ENCODE measurements at regions of chr11 and their contacts with region 1.

Region 1: GRCh38 chr11:76799066-76799804 is 16.1 kb downstream of the TSKU start:
- DNase-seq: no peak
- H3K4me3 ChIP-seq: no peak overlapping the region
- CTCF ChIP-seq: peak; percentile 85

Region 2: GRCh38 chr11:76706672-76707071 is 92.6 kb before region 1 on chr11:
- in situ Hi-C with region 1: loop called (anchors 5 kb)
- DNase-seq: no peak
- H3K4me3 ChIP-seq: no peak overlapping the region
- CTCF ChIP-seq: no peak

Region 3: DNA sequence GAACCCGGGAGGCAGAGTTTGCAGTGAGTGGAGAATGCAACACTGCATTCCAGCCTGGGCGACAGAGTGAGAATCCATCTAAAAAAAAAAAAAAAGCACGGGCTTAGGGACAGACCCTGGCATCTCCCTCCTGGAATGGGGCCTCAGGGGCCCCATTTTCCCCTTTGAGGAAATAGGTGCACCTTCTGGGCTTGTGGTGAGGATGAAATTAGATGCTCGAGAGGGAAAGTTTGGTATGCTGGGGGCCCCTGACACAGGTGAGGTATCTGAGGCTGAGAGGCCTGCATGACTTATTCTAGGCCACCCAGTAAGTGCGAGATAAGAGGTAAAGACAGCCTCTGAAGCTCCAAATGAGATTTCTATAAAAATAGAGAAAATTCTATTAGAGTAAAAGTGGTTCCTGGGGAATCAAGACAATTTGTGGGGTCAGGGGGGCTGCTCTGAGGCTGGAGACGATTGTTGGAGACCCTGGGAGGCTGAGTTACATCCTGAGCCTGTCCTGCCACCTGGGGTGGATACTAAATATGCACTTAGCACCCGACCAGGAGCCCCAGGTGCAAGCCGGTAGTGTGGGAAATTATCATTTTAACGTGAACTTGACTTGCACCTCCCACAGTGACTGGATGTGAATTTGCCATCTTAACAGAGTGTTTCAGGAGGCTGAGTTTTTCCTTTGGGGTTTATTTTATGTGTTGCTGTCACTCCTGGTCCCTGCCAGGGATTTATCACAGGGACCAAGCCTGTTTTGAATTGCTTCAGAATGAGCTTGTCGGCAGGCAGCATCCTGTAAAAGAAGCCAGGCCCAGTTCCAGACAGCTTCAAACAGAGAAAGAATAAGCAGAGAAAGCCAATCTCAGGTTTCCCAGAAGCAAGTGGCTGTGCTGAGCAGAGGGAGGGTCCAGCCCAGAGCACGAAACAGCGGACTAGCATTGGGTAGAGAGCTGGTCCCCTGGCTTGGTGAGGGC is 64.5 kb before region 1 on chr11:
- in situ Hi-C with region 1: loop called (anchors 5 kb)
- DNase-seq: no peak
- H3K4me3 ChIP-seq: no peak overlapping the region
- CTCF ChIP-seq: no peak

Region 4: GRCh38 chr11:76835928-76836612 is 36.8 kb after region 1 on chr11:
- in situ Hi-C with region 1: loop called (anchors 5 kb)
- DNase-seq: peak; percentile 87
- H3K4me3 ChIP-seq: no peak overlapping the region
- CTCF ChIP-seq: no peak